ENCODE measurements at regions of chr9 and their contacts with region 1.

Region 1: GRCh38 chr9:684054-684890 is 157.2 kb upstream of the DMRT1 start:
- DNase-seq: no peak
- ATAC-seq: peak; percentile 83
- H3K4me3 ChIP-seq: peak overlapping the region; percentile 14 to 62
- H3K27ac ChIP-seq: peak overlapping the region; percentile 85 to 95
- H3K4me1 ChIP-seq: peaks cover 1 to 9% of the 10 kb centered on the region in 2 donors
- H3K27me3 ChIP-seq: no peaks in the 10 kb centered on the region

Region 2: DNA sequence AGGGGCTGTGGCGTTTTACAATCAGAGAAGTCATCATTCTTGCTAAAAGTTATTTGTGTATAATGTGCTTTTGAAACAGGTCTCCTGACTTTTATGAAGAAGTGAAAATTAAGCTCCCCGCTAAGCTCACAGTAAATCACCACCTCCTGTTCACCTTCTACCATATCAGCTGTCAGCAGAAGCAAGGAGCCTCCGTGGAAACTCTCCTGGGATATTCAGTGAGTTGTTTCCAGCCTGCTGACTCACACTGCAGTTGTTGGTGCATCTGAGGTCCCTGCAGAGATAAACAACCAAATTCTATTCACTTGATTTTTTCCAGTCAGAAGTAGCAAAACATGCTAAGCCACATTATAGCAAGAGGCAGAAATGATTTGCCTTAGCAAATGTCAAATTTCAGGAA is 312.9 kb before region 1 on chr9:
- intact Hi-C with region 1: no loop called
- DNase-seq: no peak
- ATAC-seq: no peak
- H3K4me3 ChIP-seq: no peak overlapping the region
- H3K27ac ChIP-seq: no peak overlapping the region
- H3K4me1 ChIP-seq: no peaks in the 10 kb centered on the region
- H3K27me3 ChIP-seq: no peaks in the 10 kb centered on the region

Region 3: GRCh38 chr9:404230-404629 is 280.0 kb before region 1 on chr9:
- intact Hi-C with region 1: no loop called
- DNase-seq: no peak
- ATAC-seq: no peak
- H3K4me3 ChIP-seq: no peak overlapping the region
- H3K27ac ChIP-seq: no peak overlapping the region
- H3K4me1 ChIP-seq: no peaks in the 10 kb centered on the region
- H3K27me3 ChIP-seq: no peaks in the 10 kb centered on the region

Region 4: DNA sequence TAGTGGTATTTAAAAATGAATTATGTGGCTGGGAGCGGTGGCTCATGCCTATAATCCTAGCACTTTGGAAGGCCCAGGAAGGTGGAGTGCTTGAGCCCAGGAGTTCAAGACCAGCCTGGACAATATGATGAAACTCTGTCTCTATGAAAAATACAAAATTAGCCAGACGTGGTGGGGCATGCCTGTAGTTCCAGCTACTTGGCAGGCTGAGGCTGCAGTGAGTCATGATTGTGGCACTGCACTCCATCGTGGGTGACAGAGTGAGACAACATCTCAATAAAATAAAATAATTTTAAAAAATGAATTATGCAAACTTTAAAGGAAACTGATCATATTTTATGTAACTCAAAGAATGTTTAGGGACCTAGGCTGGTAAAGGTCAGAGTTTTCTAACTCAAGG is 153.6 kb before region 1 on chr9:
- intact Hi-C with region 1: loop called in 1 of 2 experiments (anchors 10 kb)
- DNase-seq: peak; percentile 77 to 81
- ATAC-seq: peak; percentile 79
- H3K4me3 ChIP-seq: no peak overlapping the region
- H3K27ac ChIP-seq: no peak overlapping the region
- H3K4me1 ChIP-seq: peaks cover 5 to 24% of the 10 kb centered on the region in 2 donors
- H3K27me3 ChIP-seq: no peaks in the 10 kb centered on the region

Region 5: GRCh38 chr9:626596-626995 is 57.7 kb before region 1 on chr9:
- intact Hi-C with region 1: loop called in 1 of 2 experiments (anchors 2 kb)
- DNase-seq: no peak
- ATAC-seq: peak; percentile 53
- H3K4me3 ChIP-seq: no peak overlapping the region
- H3K27ac ChIP-seq: peak overlapping the region; percentile 77 to 87
- H3K4me1 ChIP-seq: peaks cover 3 to 13% of the 10 kb centered on the region in 2 donors
- H3K27me3 ChIP-seq: no peaks in the 10 kb centered on the region

Region 6: DNA sequence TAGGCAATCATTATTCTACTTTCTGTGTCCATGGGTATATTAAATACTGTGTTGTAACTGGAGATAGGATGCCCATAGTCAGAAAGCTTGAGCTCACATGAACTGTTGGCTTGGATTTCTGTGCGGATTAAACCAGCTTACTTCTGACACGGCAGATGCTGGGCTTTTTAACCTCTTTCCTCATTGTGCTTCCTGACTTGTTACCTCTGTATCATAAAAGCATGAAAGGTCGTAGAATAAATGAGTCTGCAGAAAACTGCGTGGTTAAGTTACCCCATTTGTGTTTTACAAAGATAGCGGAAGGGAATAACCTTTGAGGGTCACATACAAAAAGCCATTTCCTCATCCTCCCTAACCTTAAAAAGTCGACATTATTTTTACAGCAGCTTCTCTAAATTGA is 42.3 kb before region 1 on chr9:
- intact Hi-C with region 1: loop called in 1 of 2 experiments (anchors 5 kb)
- DNase-seq: no peak
- ATAC-seq: no peak
- H3K4me3 ChIP-seq: no peak overlapping the region
- H3K27ac ChIP-seq: peak overlapping the region; percentile 42 to 84
- H3K4me1 ChIP-seq: peaks cover 3% of the 10 kb centered on the region in 2 donors
- H3K27me3 ChIP-seq: no peaks in the 10 kb centered on the region

Region 7: GRCh38 chr9:738209-738915 is 54.1 kb after region 1 on chr9:
- intact Hi-C with region 1: loop called in 1 of 2 experiments (anchors 5 kb)
- DNase-seq: peak; percentile 81 to 84
- ATAC-seq: peak; percentile 76
- H3K4me3 ChIP-seq: no peak overlapping the region
- H3K27ac ChIP-seq: peak overlapping the region; percentile 96 to 100
- H3K4me1 ChIP-seq: peaks cover 2 to 6% of the 10 kb centered on the region in 2 donors
- H3K27me3 ChIP-seq: no peaks in the 10 kb centered on the region

Measured in aorta (tissue), 5 donors.